Activated CD4-positive, alpha-beta memory T cell treated with anti-CD3 and anti-CD28 coated beads for 36 hours (primary cell): ENCODE measurements at regions of chr16 and their contacts with region 1.

Region 1: DNA sequence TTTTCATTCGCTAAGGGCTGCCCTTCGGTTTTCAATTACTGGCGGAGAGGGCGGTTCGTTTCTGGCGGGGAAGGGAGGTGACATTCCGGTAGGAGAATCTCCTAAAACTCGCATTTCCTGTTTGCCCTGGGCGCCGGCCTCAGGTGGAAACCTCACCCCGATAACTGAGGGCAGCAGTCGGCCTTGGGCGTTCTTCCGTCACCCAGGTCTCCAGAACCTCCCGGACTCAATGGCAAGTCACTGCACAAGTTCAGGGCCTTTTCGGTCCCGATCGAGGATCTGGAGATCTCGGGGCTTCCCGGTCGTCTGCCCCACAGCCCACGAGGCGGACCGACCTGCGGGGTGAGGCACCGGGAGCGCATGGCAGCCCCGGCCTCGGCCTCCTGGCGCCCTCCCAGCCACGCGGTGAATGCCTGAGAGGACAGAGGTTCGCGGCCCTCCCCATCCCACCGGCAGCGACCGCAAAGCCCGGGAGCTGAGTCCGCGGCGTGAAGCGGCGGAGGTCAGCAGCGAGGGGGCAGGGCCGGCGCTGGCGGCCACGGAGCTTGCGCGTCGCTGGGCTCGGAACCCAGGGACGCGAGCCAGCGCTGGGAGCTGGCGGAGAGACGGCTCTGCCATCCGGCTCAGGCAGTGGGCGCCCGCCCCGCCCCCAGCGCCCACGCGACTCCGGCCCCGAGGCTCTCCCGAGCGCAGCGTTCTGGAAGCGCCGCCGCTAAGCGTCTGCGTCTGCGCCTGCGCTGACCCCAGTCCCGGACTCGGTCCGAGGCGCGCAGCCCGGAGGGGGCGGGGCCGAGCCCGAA is 58.4 kb downstream of the SRL start:
- DNase-seq: peak; percentile 95
- H3K4me3 Mint-ChIP-seq: peak overlapping the region; percentile 76
- H3K27ac Mint-ChIP-seq: peak overlapping the region; percentile 69
- H3K4me1 Mint-ChIP-seq: peaks cover 3% of the 10 kb centered on the region
- H3K27me3 Mint-ChIP-seq: peaks cover 4% of the 10 kb centered on the region

Region 2: DNA sequence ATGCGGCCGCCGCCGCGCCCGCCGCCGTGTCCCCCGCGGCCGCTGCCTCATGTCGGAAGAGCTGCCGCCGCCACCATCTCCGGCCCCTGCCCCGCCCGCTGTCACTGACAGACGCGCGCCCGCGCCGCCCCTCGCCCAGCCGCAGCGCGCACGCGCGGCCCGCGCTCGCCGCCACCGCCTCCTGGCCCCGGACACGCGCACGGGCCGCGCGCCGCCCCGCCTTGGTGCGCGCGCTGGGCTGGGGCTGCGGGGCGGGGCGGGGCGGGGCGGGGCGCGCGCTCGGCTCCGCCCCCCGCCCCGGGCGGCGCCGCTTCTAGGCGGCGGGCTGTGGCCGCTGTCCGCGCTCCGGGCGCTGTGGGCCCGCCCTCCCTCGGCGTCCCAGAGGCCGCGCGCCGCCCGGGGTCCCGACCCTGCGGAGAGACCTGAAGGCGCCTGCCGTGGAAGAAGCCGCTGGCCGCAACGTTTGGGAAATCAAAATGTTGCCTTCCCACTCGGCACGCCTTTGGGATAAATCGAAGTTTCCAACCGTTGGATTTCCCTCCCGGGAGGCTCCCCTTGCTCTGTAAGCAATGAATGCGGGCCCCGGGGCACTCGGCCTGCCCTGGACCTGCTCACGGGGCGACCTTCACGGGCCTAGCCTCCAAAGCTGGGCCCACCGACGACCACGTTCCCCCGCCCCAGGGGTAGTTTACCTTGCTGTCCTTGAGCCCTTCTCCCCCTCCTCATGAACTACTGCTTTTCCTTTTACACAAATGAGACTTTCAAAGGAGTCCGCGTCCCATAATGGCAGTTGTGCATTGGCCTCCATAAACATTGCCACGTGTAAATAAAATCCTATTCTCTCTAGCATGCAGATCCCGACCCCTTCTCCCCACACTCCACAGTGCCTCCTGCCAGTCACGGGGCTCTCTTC is 66.8 kb before region 1 on chr16 and contains the start of gene ADCY9:
- CTCF ChIA-PET with region 1: no interaction called
- POLR2A ChIA-PET with region 1: no interaction called
- intact Hi-C with region 1: loop called (anchors 2 kb)
- DNase-seq: peak; percentile 79
- H3K4me3 Mint-ChIP-seq: peak within 1 kb of the TSS; percentile 72
- H3K27ac Mint-ChIP-seq: no peak within 1 kb of the TSS
- H3K4me1 Mint-ChIP-seq: peaks cover 36% of the 10 kb centered on the region
- H3K27me3 Mint-ChIP-seq: no peaks in the 10 kb centered on the region
- total RNA-seq, gene ADCY9: 3.8 to 4.9 TPM

Region 3: GRCh38 chr16:4160658-4161430 is 22.6 kb before region 1 on chr16:
- CTCF ChIA-PET with region 1: no interaction called
- POLR2A ChIA-PET with region 1: no interaction called
- intact Hi-C with region 1: no loop called
- DNase-seq: no peak
- H3K4me3 Mint-ChIP-seq: no peak overlapping the region
- H3K27ac Mint-ChIP-seq: no peak overlapping the region
- H3K4me1 Mint-ChIP-seq: peaks cover 2% of the 10 kb centered on the region
- H3K27me3 Mint-ChIP-seq: no peaks in the 10 kb centered on the region